WTC11 (cell line): ENCODE measurements at regions of chr10 and their contacts with region 1.

Region 1: GRCh38 chr10:76036111-76036940 is 604.9 kb downstream of the LRMDA start:
- DNase-seq: peak; percentile 83
- ATAC-seq: peak; percentile 77
- H3K4me3 Mint-ChIP-seq: no peak overlapping the region
- H3K27ac Mint-ChIP-seq: no peak overlapping the region
- H3K4me1 Mint-ChIP-seq: peaks cover 26% of the 10 kb centered on the region
- H3K27me3 Mint-ChIP-seq: no peaks in the 10 kb centered on the region; the same call in 1 of the 2 replicates
- CTCF ChIP-seq: peak; percentile 78

Region 2: DNA sequence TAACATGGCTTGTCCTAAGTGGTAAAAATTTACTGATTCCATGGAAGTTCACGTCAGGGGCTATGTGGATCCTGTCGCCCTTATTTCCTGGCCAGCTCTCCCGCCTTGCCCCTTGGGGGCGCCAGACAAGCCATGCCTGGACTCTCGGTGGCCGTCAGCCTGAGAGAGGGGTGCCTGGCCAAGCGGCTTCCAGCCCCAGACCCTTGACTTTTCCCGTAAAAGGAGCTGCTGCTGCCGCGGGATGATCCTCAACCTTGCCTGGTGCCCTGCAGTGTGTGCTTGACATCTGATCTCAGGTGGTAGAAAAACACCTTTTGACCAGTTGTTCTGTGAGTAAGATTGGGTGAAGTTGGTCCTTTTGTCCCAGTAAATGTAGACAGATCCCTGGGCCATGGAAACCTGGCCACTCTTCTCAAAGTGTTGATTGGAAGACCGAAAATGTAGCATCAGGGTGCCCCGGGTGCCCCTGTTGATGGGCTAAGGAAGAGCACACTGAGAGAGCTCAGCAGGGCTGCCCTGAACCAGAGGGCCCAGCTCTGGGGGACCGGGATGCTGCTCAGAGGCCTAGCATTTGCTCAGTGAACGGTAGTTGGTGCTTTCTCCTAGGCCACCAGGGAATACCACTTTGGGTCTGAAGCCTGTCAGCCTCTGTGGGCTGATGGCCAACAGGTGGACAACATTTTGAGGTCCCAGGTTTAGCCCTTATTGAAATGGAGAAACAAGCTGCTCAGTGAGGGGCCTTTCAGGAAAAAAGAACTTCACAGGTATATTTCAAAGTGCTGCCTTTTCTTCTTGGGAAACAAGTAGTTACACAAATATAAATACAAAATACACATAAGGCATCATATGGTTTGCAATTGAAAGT is 442.4 kb before region 1 on chr10:
- CTCF ChIA-PET with region 1: interaction called, 10 read pairs
- POLR2A ChIA-PET with region 1: no interaction called
- DNase-seq: peak; percentile 75
- ATAC-seq: peak; percentile 87
- H3K4me3 Mint-ChIP-seq: no peak overlapping the region
- H3K27ac Mint-ChIP-seq: no peak overlapping the region
- H3K4me1 Mint-ChIP-seq: peaks cover 45% of the 10 kb centered on the region
- H3K27me3 Mint-ChIP-seq: peaks cover 42% of the 10 kb centered on the region
- CTCF ChIP-seq: peak; percentile 49

Region 3: GRCh38 chr10:76051007-76051936 is 14.9 kb after region 1 on chr10:
- CTCF ChIA-PET with region 1: interaction called, 16 read pairs
- POLR2A ChIA-PET with region 1: no interaction called
- DNase-seq: no peak
- ATAC-seq: peak; percentile 52
- H3K4me3 Mint-ChIP-seq: no peak overlapping the region
- H3K27ac Mint-ChIP-seq: no peak overlapping the region
- H3K4me1 Mint-ChIP-seq: peaks cover 10% of the 10 kb centered on the region
- H3K27me3 Mint-ChIP-seq: peaks cover 4% of the 10 kb centered on the region
- CTCF ChIP-seq: no peak

Region 4: GRCh38 chr10:76086761-76087639 is 50.7 kb after region 1 on chr10:
- CTCF ChIA-PET with region 1: interaction called, 29 read pairs
- POLR2A ChIA-PET with region 1: interaction called, 7 read pairs
- DNase-seq: peak; percentile 51
- ATAC-seq: peak; percentile 66
- H3K4me3 Mint-ChIP-seq: no peak overlapping the region
- H3K27ac Mint-ChIP-seq: no peak overlapping the region
- H3K4me1 Mint-ChIP-seq: peaks cover 58% of the 10 kb centered on the region
- H3K27me3 Mint-ChIP-seq: peaks cover 12% of the 10 kb centered on the region
- CTCF ChIP-seq: peak; percentile 73

Region 5: GRCh38 chr10:76303682-76304316 is 267.5 kb after region 1 on chr10:
- CTCF ChIA-PET with region 1: interaction called, 28 read pairs
- POLR2A ChIA-PET with region 1: no interaction called
- DNase-seq: peak; percentile 76
- ATAC-seq: peak; percentile 98
- H3K4me3 Mint-ChIP-seq: no peak overlapping the region
- H3K27ac Mint-ChIP-seq: no peak overlapping the region
- H3K4me1 Mint-ChIP-seq: peaks cover 46% of the 10 kb centered on the region
- H3K27me3 Mint-ChIP-seq: peaks cover 25% of the 10 kb centered on the region
- CTCF ChIP-seq: peak; percentile 34; the same call in 1 of the 2 replicates